A673 (cell line): ENCODE measurements at regions of chr2 and their contacts with region 1.

Region 1: GRCh38 chr2:85302121-85302520 is 25.7 kb downstream of the TGOLN2 start:
- DNase-seq: no peak
- H3K4me3 ChIP-seq: no peak overlapping the region
- H3K27ac ChIP-seq: no peak overlapping the region
- H3K4me1 ChIP-seq: peaks cover 3% of the 10 kb centered on the region
- H3K27me3 ChIP-seq: no peaks in the 10 kb centered on the region
- CTCF ChIP-seq: no peak

Region 2: DNA sequence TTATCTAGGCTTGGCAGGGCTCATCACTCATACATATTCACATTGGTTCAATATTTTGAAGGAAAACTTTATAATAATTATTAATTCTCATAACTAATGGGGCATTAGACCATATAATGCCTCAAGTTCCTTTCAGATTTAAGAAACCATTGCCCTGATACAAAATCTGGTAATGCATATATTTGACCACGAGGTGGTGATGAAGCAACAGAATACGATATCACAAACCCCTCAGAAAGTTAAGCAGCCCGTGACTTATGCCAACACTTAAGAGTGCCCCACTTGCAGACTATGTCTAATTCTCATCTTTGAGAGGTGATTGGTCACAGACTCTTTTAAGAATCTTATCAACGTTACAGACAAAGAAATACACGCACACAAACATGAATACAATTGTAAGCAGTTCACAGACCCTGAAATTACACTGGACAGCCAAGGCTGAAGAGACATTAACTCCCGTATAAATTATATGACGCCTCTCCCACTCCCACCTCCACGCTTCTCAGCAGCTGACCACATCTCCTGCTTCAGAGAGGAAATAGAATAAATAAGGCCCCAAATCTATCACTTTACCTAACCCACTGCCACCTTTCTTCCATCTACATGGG is 806.5 kb before region 1 on chr2:
- CTCF ChIA-PET with region 1: no interaction called
- POLR2A ChIA-PET with region 1: no interaction called
- intact Hi-C with region 1: loop called (anchors 2 kb)
- DNase-seq: peak; percentile 78
- H3K4me3 ChIP-seq: no peak overlapping the region
- H3K27ac ChIP-seq: no peak overlapping the region
- H3K4me1 ChIP-seq: no peaks in the 10 kb centered on the region
- H3K27me3 ChIP-seq: no peaks in the 10 kb centered on the region
- CTCF ChIP-seq: peak; percentile 67

Region 3: DNA sequence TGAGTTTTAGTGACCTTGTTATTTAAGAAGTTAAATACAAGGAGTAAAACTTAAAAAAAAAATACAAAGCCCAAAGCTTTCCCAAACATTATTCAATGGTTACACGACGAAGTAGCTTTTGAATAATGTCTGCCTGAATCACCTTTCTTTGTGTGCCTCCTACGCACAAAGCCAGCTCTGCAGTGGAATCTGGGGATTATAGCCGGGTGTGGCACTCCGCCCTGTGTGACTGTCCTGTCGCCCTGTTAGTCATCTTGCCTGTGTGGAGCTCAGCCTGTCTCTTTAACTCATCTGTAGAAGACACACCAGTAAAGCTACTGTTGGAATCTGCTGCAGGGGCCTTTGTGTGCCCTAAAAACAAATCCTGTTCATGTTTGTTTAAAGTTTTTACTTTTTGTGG is 248.3 kb before region 1 on chr2:
- CTCF ChIA-PET with region 1: no interaction called
- POLR2A ChIA-PET with region 1: no interaction called
- intact Hi-C with region 1: no loop called
- DNase-seq: peak; percentile 58
- H3K4me3 ChIP-seq: no peak overlapping the region
- H3K27ac ChIP-seq: no peak overlapping the region
- H3K4me1 ChIP-seq: peaks cover 8% of the 10 kb centered on the region
- H3K27me3 ChIP-seq: no peaks in the 10 kb centered on the region
- CTCF ChIP-seq: no peak

Region 4: DNA sequence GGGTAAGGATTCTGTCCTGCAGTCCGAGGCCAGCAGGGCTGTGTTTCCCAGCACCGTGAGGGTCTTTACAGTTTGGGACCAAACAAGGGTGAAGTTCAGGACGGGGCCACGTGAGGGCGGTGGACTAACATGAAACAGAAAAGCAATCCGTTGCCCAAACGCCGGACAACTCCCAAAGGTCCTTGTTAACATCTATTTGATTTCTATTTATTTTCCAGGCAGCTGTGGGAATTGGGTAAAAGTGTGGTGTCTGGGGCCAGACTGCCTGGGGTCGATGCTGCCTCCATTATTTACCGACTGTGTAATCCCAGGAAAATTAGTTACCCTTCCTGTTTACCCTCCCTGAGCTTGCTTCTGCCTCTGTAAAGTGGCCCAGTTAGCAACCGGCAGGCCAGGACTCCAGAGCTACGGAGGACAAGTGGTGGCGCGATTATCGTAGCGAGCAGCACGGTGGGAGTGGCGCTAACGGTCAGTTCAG is 235.2 kb before region 1 on chr2:
- CTCF ChIA-PET with region 1: interaction called, 38 read pairs
- POLR2A ChIA-PET with region 1: no interaction called
- intact Hi-C with region 1: loop called (anchors 1 kb)
- DNase-seq: peak; percentile 82
- H3K4me3 ChIP-seq: peak overlapping the region; percentile 14
- H3K27ac ChIP-seq: no peak overlapping the region
- H3K4me1 ChIP-seq: no peaks in the 10 kb centered on the region
- H3K27me3 ChIP-seq: no peaks in the 10 kb centered on the region
- CTCF ChIP-seq: peak; percentile 79

Region 5: GRCh38 chr2:85132834-85133637 is 169.1 kb before region 1 on chr2 and contains the start of gene TCF7L1:
- CTCF ChIA-PET with region 1: interaction called, 3 read pairs
- POLR2A ChIA-PET with region 1: no interaction called
- intact Hi-C with region 1: loop called (anchors 1 kb)
- DNase-seq: peak; percentile 93
- H3K4me3 ChIP-seq: peak within 1 kb of the TSS; percentile 71
- H3K27ac ChIP-seq: peak within 1 kb of the TSS; percentile 55
- H3K4me1 ChIP-seq: peaks cover 18% of the 10 kb centered on the region
- H3K27me3 ChIP-seq: no peaks in the 10 kb centered on the region
- CTCF ChIP-seq: peak; percentile 96
- total RNA-seq, gene TCF7L1: 21.9 and 29.3 TPM in 2 replicates

Region 6: DNA sequence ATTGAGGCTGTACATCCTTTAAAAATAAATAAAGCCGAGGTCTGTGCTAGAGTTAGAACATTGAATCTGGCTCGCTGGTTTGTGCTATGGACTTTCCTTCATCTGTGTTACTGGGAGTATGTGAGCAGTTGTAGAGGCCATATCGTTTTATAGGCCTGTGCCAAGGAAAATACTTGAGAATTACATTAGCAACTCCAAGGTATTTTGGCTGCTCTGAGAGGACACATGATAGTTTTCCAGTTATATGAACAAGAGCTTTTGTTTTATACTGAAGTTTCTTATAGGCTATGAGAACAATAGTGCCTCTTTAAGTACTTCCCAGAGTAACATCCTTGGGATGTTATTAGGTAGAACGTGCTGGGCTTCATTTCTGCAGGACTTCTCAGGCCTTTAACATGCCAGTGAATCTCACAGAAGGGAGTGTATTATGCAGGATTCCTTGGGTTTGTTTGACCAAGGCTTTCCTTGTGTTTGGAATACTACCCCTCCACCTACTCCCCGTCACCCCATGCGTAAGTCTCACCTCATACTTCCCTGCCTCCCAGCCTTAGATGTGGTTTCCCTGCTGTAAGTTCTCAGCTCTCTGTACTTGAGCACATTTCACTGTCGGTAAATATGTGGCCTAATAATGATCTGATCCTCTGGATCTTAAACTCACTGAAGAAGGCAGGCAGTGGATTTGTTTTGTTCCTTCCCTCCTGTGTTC is 147.9 kb before region 1 on chr2:
- CTCF ChIA-PET with region 1: interaction called, 12 read pairs
- POLR2A ChIA-PET with region 1: no interaction called
- intact Hi-C with region 1: no loop called
- DNase-seq: no peak
- H3K4me3 ChIP-seq: no peak overlapping the region
- H3K27ac ChIP-seq: no peak overlapping the region
- H3K4me1 ChIP-seq: peaks cover 27% of the 10 kb centered on the region
- H3K27me3 ChIP-seq: no peaks in the 10 kb centered on the region
- CTCF ChIP-seq: no peak

Region 7: DNA sequence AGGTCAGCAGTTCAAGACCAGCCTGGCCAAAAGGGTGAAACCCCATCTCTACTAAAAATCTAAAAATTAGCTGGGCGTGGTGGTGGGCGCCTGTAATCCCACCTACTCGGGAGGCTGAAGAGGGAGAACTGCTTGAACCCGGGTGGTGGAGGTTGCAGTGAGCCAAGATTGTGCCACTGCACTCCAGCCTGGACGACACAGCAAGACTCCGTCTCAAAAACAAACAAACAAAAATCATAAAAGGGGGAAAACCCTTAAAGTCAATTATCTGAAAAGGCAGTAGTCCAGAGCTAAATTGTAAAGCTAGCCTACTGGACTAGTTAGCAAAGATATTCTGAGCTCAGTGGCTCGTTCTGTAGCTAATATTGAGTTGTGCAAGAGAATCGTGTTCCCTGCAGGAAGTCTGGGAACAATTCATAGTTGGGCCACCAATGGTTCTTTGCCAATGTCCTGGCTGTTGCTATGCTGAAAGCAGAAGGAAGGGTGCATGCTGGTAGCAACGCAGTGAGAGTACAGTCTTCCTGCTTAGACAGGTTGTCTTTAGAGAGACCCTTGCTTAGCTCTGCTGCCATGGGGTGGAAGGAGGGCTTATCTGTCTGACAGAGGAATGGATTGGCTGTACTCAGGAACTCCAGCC is 21.3 kb after region 1 on chr2:
- CTCF ChIA-PET with region 1: no interaction called
- POLR2A ChIA-PET with region 1: no interaction called
- intact Hi-C with region 1: no loop called
- DNase-seq: no peak
- H3K4me3 ChIP-seq: no peak overlapping the region
- H3K27ac ChIP-seq: no peak overlapping the region
- H3K4me1 ChIP-seq: peaks cover 10% of the 10 kb centered on the region
- H3K27me3 ChIP-seq: no peaks in the 10 kb centered on the region
- CTCF ChIP-seq: no peak

Region 8: GRCh38 chr2:85551698-85552678 is 249.9 kb after region 1 on chr2:
- CTCF ChIA-PET with region 1: interaction called, 7 read pairs
- POLR2A ChIA-PET with region 1: no interaction called
- intact Hi-C with region 1: loop called (anchors 2 kb)
- DNase-seq: peak; percentile 83
- H3K4me3 ChIP-seq: no peak overlapping the region
- H3K27ac ChIP-seq: no peak overlapping the region
- H3K4me1 ChIP-seq: no peaks in the 10 kb centered on the region
- H3K27me3 ChIP-seq: no peaks in the 10 kb centered on the region
- CTCF ChIP-seq: peak; percentile 90